ENCODE measurements at regions of chr3 and their contacts with region 1.

Region 1: DNA sequence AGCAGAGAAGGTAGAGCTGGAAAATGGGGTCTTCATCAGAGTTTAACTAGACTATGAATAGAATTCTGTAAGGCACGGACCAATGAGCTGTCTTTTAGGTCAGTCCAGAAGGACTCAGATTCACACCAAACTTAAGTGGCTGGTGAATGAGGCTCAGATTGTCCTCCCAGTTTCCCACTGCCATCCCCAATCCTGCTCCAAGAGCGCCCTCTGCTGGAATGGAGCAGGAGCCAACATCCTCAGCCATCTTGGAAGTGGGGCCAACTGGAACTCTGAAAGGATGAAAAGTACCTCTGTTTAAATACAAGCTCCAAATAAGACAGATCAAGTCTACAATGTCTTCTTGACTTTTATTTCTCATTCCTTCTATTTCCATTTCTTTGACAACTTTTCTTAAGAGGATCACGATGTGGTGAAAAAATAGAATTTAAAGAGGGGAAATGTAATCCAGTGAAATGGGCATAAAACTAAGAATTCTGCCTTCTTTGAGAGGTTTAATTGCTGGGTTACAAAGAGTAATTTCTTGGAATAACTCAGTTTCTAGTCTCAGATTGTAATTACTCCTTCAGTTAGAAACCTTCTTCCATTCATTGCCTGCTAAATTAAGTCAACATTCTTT is 217.1 kb upstream of the TPRG1 start:
- DNase-seq: peak; percentile 87
- H3K4me3 ChIP-seq: no peak overlapping the region
- H3K27ac ChIP-seq: peak overlapping the region in 1 of 4 donors; percentile 13
- H3K4me1 ChIP-seq: peaks cover 2 to 22% (median 18%) of the 10 kb centered on the region in 4 donors
- H3K27me3 ChIP-seq: no peaks in the 10 kb centered on the region
- CTCF ChIP-seq: peak; percentile 88 to 96 (median 93)
- EP300 ChIP-seq: no peak
- POLR2A ChIP-seq: no peak

Region 2: GRCh38 chr3:188037216-188037718 is 917.4 kb before region 1 on chr3:
- in situ Hi-C with region 1: loop called in 1 of 4 experiments (anchors 25 kb)
- intact Hi-C with region 1: no loop called
- DNase-seq: peak; percentile 46
- H3K4me3 ChIP-seq: no peak overlapping the region
- H3K27ac ChIP-seq: peak overlapping the region in 2 of 4 donors; percentile 1 to 26
- H3K4me1 ChIP-seq: peaks cover 0 to 16% (median 14%) of the 10 kb centered on the region in 4 donors
- H3K27me3 ChIP-seq: no peaks in the 10 kb centered on the region
- CTCF ChIP-seq: peak; percentile 41 to 71 (median 50)
- EP300 ChIP-seq: no peak
- POLR2A ChIP-seq: no peak

Region 3: DNA sequence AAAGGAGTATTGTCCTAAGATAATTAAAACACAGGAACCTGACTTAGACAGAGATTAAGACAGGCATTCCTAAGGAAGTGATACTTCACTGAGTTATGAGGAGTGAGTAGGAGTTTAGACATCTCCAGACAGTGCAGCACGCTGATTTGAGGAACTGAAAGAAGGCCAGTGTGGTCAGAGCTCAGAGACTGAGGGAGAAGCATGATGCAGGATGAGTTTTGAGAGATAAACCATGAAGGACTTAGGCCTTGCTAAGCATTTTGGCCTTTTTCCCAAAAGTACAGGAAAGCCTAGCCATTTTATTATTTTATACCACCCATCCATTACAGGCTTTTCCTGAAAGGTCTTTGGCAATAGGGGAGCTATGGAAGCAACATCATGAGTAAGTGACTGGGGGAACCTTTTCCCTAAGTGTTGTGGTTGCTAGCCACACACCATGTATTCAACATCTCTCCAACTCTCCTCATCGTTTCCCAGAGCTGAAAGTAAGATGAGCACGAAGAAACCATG is 158.5 kb before region 1 on chr3:
- in situ Hi-C with region 1: no loop called
- intact Hi-C with region 1: no loop called
- DNase-seq: peak; percentile 16
- H3K4me3 ChIP-seq: no peak overlapping the region
- H3K27ac ChIP-seq: peak overlapping the region in 3 of 4 donors; percentile 22 to 48 (median 48)
- H3K4me1 ChIP-seq: peaks cover 0 to 37% (median 6%) of the 10 kb centered on the region in 4 donors
- H3K27me3 ChIP-seq: no peaks in the 10 kb centered on the region
- CTCF ChIP-seq: no peak
- EP300 ChIP-seq: no peak
- POLR2A ChIP-seq: no peak

Region 4: DNA sequence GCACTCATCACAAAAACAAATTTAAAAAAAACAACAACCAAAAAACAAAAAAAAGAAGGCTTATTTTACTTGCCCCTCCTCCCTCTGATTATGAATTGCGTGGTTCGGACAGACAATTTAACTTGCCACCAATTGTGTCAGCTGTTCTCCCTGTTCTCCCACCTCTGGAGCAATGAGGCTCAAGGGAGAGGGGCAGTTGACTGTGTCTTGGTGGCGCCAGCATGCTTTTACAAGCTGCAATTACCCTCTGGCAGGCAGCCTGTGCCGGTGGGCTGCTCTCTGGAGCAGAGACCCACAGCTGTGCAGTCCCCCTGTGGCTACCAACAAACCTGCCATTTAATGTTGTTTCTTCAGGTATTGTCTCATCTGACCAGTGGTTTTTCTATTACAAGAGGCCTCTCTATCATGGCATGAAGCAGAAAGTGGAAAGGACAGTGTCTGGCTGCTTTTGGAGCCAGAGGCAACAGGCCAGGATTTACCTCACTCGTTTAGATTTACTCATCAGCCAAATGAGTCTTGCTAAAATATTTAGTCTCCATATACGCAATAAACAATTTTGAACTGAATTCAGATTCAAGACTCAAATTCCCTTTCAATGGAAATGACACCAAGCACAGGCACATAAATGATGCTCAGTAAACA is 25.1 kb after region 1 on chr3:
- in situ Hi-C with region 1: no loop called
- intact Hi-C with region 1: no loop called
- DNase-seq: no peak
- H3K4me3 ChIP-seq: no peak overlapping the region
- H3K27ac ChIP-seq: peak overlapping the region; percentile 30 to 51 (median 33)
- H3K4me1 ChIP-seq: peaks cover 0 to 12% (median 2%) of the 10 kb centered on the region in 4 donors
- H3K27me3 ChIP-seq: no peaks in the 10 kb centered on the region
- CTCF ChIP-seq: no peak
- EP300 ChIP-seq: no peak
- POLR2A ChIP-seq: no peak

Region 5: GRCh38 chr3:189157232-189158007 is 202.7 kb after region 1 on chr3:
- in situ Hi-C with region 1: loop called in 1 of 4 experiments (anchors 10 kb)
- intact Hi-C with region 1: no loop called
- DNase-seq: no peak
- H3K4me3 ChIP-seq: no peak overlapping the region
- H3K27ac ChIP-seq: no peak overlapping the region
- H3K4me1 ChIP-seq: peaks cover 0 to 11% (median 2%) of the 10 kb centered on the region in 4 donors
- H3K27me3 ChIP-seq: no peaks in the 10 kb centered on the region
- CTCF ChIP-seq: no peak
- EP300 ChIP-seq: no peak
- POLR2A ChIP-seq: no peak

Region 6: GRCh38 chr3:189598530-189599225 is 644.0 kb after region 1 on chr3:
- in situ Hi-C with region 1: no loop called
- intact Hi-C with region 1: no loop called
- DNase-seq: no peak
- H3K4me3 ChIP-seq: no peak overlapping the region
- H3K27ac ChIP-seq: no peak overlapping the region
- H3K4me1 ChIP-seq: no peaks in the 10 kb centered on the region
- H3K27me3 ChIP-seq: no peaks in the 10 kb centered on the region
- CTCF ChIP-seq: no peak
- EP300 ChIP-seq: no peak
- POLR2A ChIP-seq: no peak